ENCODE measurements at regions of chr13 and their contacts with region 1.

Region 1: DNA sequence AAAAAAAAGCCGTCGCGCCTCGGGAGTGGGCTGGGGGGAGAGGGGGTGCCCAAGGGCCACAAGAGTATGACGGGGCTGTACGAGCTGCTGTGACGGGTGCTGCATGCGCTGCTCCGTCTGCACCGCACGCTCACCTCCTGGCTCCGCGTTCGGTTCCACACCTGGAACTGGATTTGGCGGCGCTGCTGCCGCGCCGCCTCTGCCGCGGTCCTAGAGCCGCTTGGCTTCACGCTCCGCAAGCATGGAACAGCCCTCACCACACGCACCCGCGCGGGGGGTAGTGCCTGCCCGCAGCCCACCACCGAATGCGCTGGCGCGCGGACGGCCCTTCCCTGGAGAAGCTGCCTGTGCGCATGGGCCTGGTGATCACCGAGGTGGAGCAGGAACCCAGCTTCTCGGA is 18.8 kb downstream of the C1QTNF9 start:
- DNase-seq: no peak
- H3K4me3 ChIP-seq: peak overlapping the region in 1 of 4 donors; percentile 38
- H3K27ac ChIP-seq: no peak overlapping the region
- H3K4me1 ChIP-seq: peaks cover 0 to 11% (median 0%) of the 10 kb centered on the region in 4 donors
- H3K27me3 ChIP-seq: peaks cover 14% of the 10 kb centered on the region
- CTCF ChIP-seq: no peak
- EP300 ChIP-seq: no peak
- POLR2A ChIP-seq: no peak

Region 2: DNA sequence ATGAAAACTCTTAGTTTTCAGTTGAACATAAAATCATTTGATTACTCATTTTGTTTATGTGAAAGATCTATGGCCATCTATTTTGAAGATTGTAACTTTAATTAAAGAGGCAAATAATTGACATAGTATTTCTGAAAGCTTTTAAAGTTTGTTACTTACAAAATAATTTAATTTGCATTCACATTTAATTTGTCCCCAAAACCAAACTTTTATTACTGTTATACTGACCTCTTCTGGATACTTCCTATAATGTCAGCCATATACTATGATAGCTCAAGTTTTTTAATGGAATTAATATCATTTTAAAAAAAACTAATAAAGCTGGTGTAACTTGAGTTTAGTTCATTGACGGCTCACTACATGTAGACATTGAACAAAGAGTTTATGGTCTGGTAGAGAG is 1152.2 kb before region 1 on chr13:
- in situ Hi-C with region 1: no loop called
- intact Hi-C with region 1: no loop called
- DNase-seq: no peak
- H3K4me3 ChIP-seq: no peak overlapping the region
- H3K27ac ChIP-seq: no peak overlapping the region
- H3K4me1 ChIP-seq: no peaks in the 10 kb centered on the region
- H3K27me3 ChIP-seq: no peaks in the 10 kb centered on the region
- CTCF ChIP-seq: no peak
- EP300 ChIP-seq: no peak
- POLR2A ChIP-seq: no peak

Region 3: GRCh38 chr13:23794267-23795161 is 533.6 kb before region 1 on chr13:
- in situ Hi-C with region 1: no loop called
- intact Hi-C with region 1: no loop called
- DNase-seq: no peak
- H3K4me3 ChIP-seq: no peak overlapping the region
- H3K27ac ChIP-seq: peak overlapping the region in 2 of 4 donors; percentile 18 to 21
- H3K4me1 ChIP-seq: peaks cover 0 to 8% (median 2%) of the 10 kb centered on the region in 4 donors
- H3K27me3 ChIP-seq: no peaks in the 10 kb centered on the region
- CTCF ChIP-seq: no peak
- EP300 ChIP-seq: no peak
- POLR2A ChIP-seq: no peak

Region 4: GRCh38 chr13:23889615-23890607 is 438.2 kb before region 1 on chr13:
- in situ Hi-C with region 1: loop called in 1 of 4 experiments (anchors 5 kb)
- intact Hi-C with region 1: loop called (anchors 5 kb)
- DNase-seq: no peak
- H3K4me3 ChIP-seq: peak overlapping the region in 3 of 4 donors; percentile 82 to 95 (median 91)
- H3K27ac ChIP-seq: peak overlapping the region; percentile 89 to 96 (median 94)
- H3K4me1 ChIP-seq: peaks cover 13 to 17% (median 14%) of the 10 kb centered on the region in 4 donors
- H3K27me3 ChIP-seq: no peaks in the 10 kb centered on the region
- CTCF ChIP-seq: no peak
- EP300 ChIP-seq: no peak
- POLR2A ChIP-seq: no peak